PC-9 (cell line): ENCODE measurements at regions of chr6 and their contacts with region 1.

Region 1: GRCh38 chr6:126002755-126003679 is 16.7 kb downstream of the TRMT11 start:
- DNase-seq: peak in 1 of 2 experiments; percentile 28
- H3K4me3 ChIP-seq: no peak overlapping the region
- H3K27ac ChIP-seq: no peak overlapping the region
- H3K4me1 ChIP-seq: no peaks in the 10 kb centered on the region
- H3K27me3 ChIP-seq: no peaks in the 10 kb centered on the region
- CTCF ChIP-seq: no peak; the same call in 1 of the 2 replicates

Region 2: DNA sequence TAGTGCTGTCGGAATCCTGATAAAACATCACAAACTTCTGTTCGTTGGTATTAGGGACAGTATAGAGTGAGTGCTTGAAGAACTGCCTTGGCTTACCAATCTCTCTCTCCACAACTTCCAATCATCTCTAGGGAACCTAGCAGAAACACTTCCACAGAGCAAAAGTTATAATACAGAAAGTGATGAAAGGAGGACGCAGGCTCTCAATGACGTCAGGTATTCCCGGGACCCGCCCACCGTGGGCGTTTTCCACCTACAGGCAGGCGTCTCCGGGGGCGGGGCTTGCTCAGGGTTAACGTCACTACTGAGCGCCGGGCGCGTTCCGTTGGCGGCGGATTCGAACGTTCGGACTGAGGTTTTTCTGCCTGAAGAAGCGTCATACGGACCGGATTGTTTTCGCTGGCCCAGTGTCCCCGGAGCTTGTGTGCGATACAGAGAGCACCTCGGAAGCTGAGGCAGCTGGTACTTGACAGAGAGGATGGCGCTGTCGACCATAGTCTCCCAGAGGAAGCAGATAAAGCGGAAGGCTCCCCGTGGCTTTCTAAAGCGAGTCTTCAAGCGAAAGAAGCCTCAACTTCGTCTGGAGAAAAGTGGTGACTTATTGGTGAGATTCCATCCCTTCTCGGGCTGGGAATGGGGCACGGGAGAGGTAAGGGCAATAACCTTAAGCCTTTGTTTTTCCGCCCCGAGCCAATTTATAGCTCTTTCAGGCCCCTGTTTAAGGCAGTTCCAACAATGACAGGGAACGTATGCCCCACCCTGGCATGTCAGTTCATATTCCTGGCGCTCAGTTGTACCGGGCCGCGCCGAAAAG is 337.0 kb after region 1 on chr6 and contains the start of gene CENPW:
- CTCF ChIA-PET with region 1: no interaction called
- POLR2A ChIA-PET with region 1: no interaction called
- intact Hi-C with region 1: loop called (anchors 10 kb)
- DNase-seq: peak; percentile 85 to 90
- H3K4me3 ChIP-seq: peak within 1 kb of the TSS; percentile 84
- H3K27ac ChIP-seq: peak within 1 kb of the TSS; percentile 39
- H3K4me1 ChIP-seq: peaks cover 30% of the 10 kb centered on the region
- H3K27me3 ChIP-seq: no peaks in the 10 kb centered on the region
- CTCF ChIP-seq: no peak
- total RNA-seq, gene CENPW: 54.5 and 85.1 TPM in 2 replicates